Activated CD4-positive, alpha-beta memory T cell treated with anti-CD3 and anti-CD28 coated beads for 36 hours (primary cell): ENCODE measurements at regions of chr15 and their contacts with region 1.

Region 1: GRCh38 chr15:101258238-101259144 is 6.6 kb upstream of the CHSY1 start:
- DNase-seq: peak; percentile 62
- H3K4me3 Mint-ChIP-seq: peak overlapping the region; percentile 35
- H3K27ac Mint-ChIP-seq: no peak overlapping the region
- H3K4me1 Mint-ChIP-seq: peaks cover 10% of the 10 kb centered on the region
- H3K27me3 Mint-ChIP-seq: peaks cover 2% of the 10 kb centered on the region

Region 2: GRCh38 chr15:100918034-100918689 is 340.3 kb before region 1 on chr15:
- CTCF ChIA-PET with region 1: interaction called, 3 read pairs
- POLR2A ChIA-PET with region 1: no interaction called
- intact Hi-C with region 1: loop called (anchors 5 kb)
- DNase-seq: peak; percentile 76
- H3K4me3 Mint-ChIP-seq: peak overlapping the region; percentile 67
- H3K27ac Mint-ChIP-seq: no peak overlapping the region
- H3K4me1 Mint-ChIP-seq: peaks cover 17% of the 10 kb centered on the region
- H3K27me3 Mint-ChIP-seq: peaks cover 45% of the 10 kb centered on the region

Region 3: GRCh38 chr15:101014921-101015841 is 243.3 kb before region 1 on chr15:
- CTCF ChIA-PET with region 1: interaction called, 97 read pairs
- POLR2A ChIA-PET with region 1: no interaction called
- intact Hi-C with region 1: loop called (anchors 1 kb)
- DNase-seq: peak; percentile 80
- H3K4me3 Mint-ChIP-seq: no peak overlapping the region
- H3K27ac Mint-ChIP-seq: no peak overlapping the region
- H3K4me1 Mint-ChIP-seq: peaks cover 4% of the 10 kb centered on the region
- H3K27me3 Mint-ChIP-seq: peaks cover 3% of the 10 kb centered on the region

Region 4: GRCh38 chr15:101049856-101050622 is 208.5 kb before region 1 on chr15:
- CTCF ChIA-PET with region 1: no interaction called
- POLR2A ChIA-PET with region 1: no interaction called
- intact Hi-C with region 1: no loop called
- DNase-seq: peak; percentile 3
- H3K4me3 Mint-ChIP-seq: no peak overlapping the region
- H3K27ac Mint-ChIP-seq: no peak overlapping the region
- H3K4me1 Mint-ChIP-seq: no peaks in the 10 kb centered on the region
- H3K27me3 Mint-ChIP-seq: peaks cover 2% of the 10 kb centered on the region

Region 5: DNA sequence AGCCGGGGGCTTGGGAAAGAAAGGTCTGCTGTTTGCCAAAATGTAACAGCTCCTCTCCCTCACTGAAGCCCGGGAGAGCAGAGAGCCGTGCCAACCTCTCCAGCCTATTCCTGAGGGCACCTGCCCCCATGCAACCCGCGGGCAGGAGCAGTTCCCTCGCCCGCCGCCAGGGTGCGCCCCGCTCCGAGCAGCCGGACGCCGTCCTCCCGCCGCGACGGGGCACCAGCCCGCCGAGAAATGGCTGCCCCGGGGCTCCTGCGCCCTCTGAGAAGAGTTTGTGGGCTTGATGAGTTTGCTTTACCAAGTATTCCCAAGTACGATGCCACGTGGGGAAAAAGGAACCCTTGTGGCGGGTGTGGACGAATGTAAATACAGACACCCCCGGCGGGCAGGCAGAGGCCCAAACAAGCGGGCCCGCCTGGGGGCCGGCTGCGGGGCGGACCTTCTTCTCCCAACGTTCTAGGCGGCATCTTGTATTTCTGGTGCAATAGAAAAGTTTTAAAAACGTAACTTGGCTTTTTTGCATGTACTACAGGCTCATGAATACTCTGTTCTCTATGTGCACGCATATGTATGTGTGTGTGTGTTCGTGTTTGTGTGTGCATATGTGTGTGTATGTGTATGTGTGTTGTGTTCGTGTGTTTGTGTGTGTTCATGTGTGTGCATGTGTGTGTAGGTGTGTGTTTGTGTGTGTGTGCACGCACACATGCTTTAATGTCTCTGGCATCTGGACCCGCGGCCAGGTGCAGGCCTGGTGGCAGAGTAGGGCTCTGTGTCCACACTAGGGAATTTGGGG is 169.5 kb before region 1 on chr15:
- CTCF ChIA-PET with region 1: interaction called, 123 read pairs
- POLR2A ChIA-PET with region 1: interaction called, 3 read pairs
- intact Hi-C with region 1: loop called (anchors 1 kb)
- DNase-seq: peak; percentile 84
- H3K4me3 Mint-ChIP-seq: no peak overlapping the region
- H3K27ac Mint-ChIP-seq: no peak overlapping the region
- H3K4me1 Mint-ChIP-seq: no peaks in the 10 kb centered on the region
- H3K27me3 Mint-ChIP-seq: peaks cover 1% of the 10 kb centered on the region

Region 6: DNA sequence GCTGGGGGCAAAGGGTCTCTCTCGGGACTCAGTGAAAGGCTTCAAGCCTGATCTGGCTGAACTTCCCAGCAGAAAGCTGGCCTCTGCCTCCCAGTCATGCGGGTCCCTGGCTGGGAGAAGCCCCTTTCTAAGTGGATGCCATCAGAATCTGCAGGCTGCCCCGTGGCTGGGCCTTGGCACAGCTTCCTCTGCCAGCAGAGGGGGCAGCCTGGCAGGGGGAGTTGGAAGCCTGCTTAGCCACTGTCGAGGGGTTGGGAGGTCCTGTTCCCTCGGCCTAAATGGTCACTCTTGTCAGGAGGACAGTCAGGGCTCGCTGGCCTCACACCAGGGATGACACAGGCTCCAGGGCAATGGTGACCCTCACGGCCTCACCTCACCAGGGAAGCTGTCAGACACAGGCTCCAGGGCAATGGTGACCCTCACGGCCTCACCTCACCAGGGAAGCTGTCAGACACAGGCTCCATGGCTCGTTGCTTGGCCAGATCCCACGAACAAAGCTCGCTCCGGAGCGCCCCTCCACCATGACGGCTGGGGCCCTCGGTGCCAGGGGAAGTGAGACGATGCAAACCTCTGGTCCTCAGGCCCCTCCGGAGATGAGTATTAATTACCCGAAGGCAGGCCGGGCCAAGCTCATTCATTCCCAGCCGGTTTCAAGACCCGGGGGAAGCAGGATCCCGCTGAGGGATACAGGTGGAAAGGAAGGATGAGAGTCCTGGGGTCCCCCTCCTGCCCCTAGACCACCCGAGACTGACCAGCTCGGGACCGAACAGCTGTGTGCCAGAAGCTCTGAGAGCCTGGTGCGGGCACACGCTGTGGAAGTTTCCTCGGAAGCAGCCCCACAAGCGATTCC is 157.7 kb before region 1 on chr15:
- CTCF ChIA-PET with region 1: interaction called, 11 read pairs
- POLR2A ChIA-PET with region 1: no interaction called
- intact Hi-C with region 1: no loop called
- DNase-seq: no peak
- H3K4me3 Mint-ChIP-seq: no peak overlapping the region
- H3K27ac Mint-ChIP-seq: no peak overlapping the region
- H3K4me1 Mint-ChIP-seq: peaks cover 7% of the 10 kb centered on the region
- H3K27me3 Mint-ChIP-seq: no peaks in the 10 kb centered on the region